Aorta (tissue), 5 donors: ENCODE measurements at regions of chr2 and their contacts with region 1.

Region 1: GRCh38 chr2:64661741-64662169 is 8.0 kb upstream of the SERTAD2 start:
- DNase-seq: no peak
- ATAC-seq: no peak
- H3K4me3 ChIP-seq: no peak overlapping the region
- H3K27ac ChIP-seq: no peak overlapping the region
- H3K4me1 ChIP-seq: no peaks in the 10 kb centered on the region
- H3K27me3 ChIP-seq: no peaks in the 10 kb centered on the region

Region 2: DNA sequence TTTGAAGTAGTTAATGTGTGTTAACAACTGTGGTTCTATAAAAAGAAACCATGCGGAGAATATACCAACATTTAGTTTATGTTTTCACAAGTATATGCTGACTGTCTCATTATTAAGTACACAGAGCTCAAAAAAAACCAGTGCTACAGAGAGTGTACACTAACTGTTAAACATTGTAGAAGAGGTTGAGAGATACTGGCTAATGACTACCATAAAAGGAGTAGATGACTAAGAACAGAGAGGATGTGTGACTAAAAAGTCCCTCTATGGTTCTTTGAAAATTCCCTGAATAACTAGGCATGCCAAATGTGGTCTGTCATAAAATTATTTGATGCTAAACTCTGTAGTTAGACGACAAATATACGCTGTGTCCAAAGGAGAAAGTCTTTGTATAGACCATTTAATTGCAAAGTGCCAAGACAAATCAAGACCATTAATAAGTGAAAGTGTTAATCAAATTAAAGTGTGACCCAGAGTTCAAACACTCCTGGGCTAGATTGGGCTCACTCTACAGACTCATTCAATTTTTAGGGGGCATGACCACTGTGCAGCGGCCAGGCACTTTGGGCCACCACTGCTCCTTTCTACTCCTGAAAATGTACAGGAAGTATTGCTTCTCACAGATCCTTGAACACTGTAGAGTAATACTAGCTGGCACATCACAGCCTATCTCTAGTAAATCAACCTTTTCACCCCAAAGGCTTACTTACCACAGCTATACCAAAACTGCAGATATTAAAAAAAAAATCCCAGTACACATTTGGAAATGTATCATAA is 37.1 kb after region 1 on chr2:
- intact Hi-C with region 1: loop called in 1 of 2 experiments (anchors 5 kb)
- DNase-seq: no peak
- ATAC-seq: no peak
- H3K4me3 ChIP-seq: no peak overlapping the region
- H3K27ac ChIP-seq: no peak overlapping the region
- H3K4me1 ChIP-seq: no peaks in the 10 kb centered on the region
- H3K27me3 ChIP-seq: no peaks in the 10 kb centered on the region

Region 3: DNA sequence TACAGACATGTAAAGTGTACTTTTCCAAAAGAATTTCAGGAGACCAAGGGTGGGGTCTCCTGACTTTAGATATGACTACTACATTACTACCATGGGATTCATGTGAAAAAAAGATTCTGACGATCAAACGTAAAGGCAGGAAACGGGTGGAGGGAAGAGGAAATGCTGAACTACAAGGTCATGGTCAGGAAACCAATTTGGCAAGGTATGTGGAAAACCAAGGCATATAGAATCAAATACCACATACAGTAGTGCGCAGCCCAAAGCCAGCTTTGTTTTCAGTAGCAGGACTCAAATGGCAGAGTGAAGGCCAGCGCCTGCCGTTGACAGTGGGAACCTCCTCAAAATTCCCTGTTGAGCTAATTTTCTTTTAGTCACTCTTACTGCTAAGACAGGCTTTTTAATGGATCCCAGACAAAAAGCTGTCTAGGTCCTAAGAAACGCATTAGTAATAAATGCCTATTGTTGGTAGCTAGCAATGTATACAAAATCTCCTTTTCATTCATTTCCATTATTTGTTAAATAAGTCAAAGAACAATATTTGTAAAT is 49.6 kb after region 1 on chr2:
- intact Hi-C with region 1: no loop called
- DNase-seq: no peak
- ATAC-seq: no peak
- H3K4me3 ChIP-seq: no peak overlapping the region
- H3K27ac ChIP-seq: no peak overlapping the region
- H3K4me1 ChIP-seq: no peaks in the 10 kb centered on the region
- H3K27me3 ChIP-seq: no peaks in the 10 kb centered on the region

Region 4: DNA sequence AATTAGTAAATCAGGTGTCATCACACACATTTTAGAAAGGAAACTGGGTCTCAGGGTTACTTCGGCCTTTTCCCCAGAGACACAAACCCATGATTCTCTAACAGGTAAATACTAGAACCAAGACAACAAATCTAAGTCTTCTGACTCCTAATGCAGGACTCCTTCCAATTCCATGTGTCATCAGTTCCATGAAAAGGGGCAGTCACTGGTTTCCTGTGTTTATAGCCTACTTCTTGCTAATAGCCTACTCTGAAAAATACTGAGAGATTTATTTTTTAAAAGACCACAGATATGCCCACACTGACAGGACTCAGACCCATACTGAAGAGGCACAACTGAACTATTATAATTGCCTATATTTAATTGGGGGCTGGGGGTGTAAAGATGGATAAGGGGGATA is 435.2 kb after region 1 on chr2:
- intact Hi-C with region 1: no loop called
- DNase-seq: no peak
- ATAC-seq: no peak
- H3K4me3 ChIP-seq: no peak overlapping the region
- H3K27ac ChIP-seq: no peak overlapping the region
- H3K4me1 ChIP-seq: peaks cover 0 to 1% of the 10 kb centered on the region in 2 donors
- H3K27me3 ChIP-seq: no peaks in the 10 kb centered on the region